HepG2 (cell line): ENCODE measurements at regions of chr10 and their contacts with region 1.

Region 1: DNA sequence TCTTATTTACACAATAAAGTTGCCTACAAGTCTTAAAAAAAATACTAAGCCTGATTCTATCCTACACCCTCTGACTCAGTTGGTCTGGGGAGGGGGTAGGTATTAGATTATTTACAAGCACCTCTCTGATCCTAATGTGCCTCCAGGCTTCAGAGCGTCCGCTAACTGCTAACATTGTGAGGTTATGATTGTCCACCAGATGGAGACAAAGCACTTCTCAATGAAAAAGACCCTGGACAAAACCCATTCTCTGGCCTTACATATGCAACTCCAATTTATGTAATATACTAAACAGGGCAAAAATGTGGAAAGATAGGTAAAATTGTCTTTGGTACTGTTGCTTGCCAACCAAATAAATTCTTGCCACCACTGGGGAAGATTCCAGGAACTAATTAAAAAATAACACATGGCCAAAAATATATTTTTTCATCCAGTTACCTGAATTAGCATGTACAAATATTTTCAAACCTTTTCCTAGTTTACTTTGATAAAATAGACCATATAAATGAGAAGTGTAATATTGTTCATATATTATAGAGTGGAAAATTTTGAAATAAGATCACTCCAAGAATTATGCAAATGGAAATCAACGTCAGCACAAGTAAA is 92.4 kb downstream of the KIF20B start:
- DNase-seq: peak; percentile 73
- ATAC-seq: peak; percentile 93
- H3K4me3 ChIP-seq: no peak overlapping the region
- H3K27ac ChIP-seq: no peak overlapping the region
- H3K4me1 ChIP-seq: peaks cover 29% of the 10 kb centered on the region
- H3K27me3 ChIP-seq: no peaks in the 10 kb centered on the region
- CTCF ChIP-seq: peak; percentile 83
- EP300 ChIP-seq: no peak
- POLR2A ChIP-seq: no peak
- RAD21 ChIP-seq: peak; percentile 88

Region 2: DNA sequence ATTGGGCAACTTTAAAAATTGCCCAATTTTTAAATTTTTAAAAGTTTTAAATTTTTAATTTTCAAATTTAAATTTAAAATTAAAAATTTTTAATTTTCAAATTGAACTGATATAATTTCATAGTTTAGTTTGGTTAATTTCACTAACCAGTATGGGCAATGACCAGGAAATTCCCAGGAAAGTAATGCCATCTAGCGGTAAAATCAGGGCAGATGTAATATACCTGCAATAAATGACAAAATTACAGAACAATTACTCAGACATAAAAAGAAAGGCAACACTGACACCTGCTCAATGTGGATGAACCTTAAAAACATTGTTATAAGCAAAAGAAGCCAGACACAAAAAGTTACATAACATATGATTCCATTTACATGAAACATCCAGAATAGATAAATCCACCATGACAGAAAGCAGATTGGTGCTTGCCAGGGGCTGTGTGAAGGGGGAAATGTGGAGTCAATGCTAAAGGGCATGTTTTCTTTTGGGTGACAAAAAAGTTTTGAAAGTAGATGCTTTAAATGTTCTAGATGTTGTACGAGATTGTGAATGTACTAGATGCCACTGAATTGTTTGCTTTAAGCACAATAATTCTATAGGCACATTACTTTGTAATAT is 229.8 kb before region 1 on chr10:
- CTCF ChIA-PET with region 1: no interaction called
- POLR2A ChIA-PET with region 1: no interaction called
- in situ Hi-C with region 1: no loop called
- intact Hi-C with region 1: no loop called
- DNase-seq: peak; percentile 32
- ATAC-seq: peak; percentile 64
- H3K4me3 ChIP-seq: no peak overlapping the region
- H3K27ac ChIP-seq: no peak overlapping the region
- H3K4me1 ChIP-seq: peaks cover 18% of the 10 kb centered on the region
- H3K27me3 ChIP-seq: no peaks in the 10 kb centered on the region; a peak in 1 of 5 replicates
- CTCF ChIP-seq: peak; percentile 67
- EP300 ChIP-seq: no peak
- POLR2A ChIP-seq: no peak
- RAD21 ChIP-seq: peak; percentile 61

Region 3: GRCh38 chr10:89853781-89854191 is 60.0 kb after region 1 on chr10:
- CTCF ChIA-PET with region 1: no interaction called
- POLR2A ChIA-PET with region 1: no interaction called
- in situ Hi-C with region 1: no loop called
- intact Hi-C with region 1: loop called (anchors 2 kb)
- DNase-seq: peak; percentile 5
- ATAC-seq: peak; percentile 96
- H3K4me3 ChIP-seq: no peak overlapping the region; a peak in 1 of 6 replicates
- H3K27ac ChIP-seq: no peak overlapping the region
- H3K4me1 ChIP-seq: peaks cover 7% of the 10 kb centered on the region; the same call in 1 of the 2 replicates
- H3K27me3 ChIP-seq: no peaks in the 10 kb centered on the region
- CTCF ChIP-seq: peak; percentile 60
- EP300 ChIP-seq: no peak
- POLR2A ChIP-seq: no peak
- RAD21 ChIP-seq: no peak

Region 4: GRCh38 chr10:90148116-90148855 is 354.5 kb after region 1 on chr10:
- CTCF ChIA-PET with region 1: no interaction called
- POLR2A ChIA-PET with region 1: no interaction called
- in situ Hi-C with region 1: loop called (anchors 10 kb)
- intact Hi-C with region 1: no loop called
- DNase-seq: peak; percentile 3
- ATAC-seq: peak; percentile 22; the same call in 1 of the 3 replicates
- H3K4me3 ChIP-seq: no peak overlapping the region
- H3K27ac ChIP-seq: no peak overlapping the region
- H3K4me1 ChIP-seq: no peaks in the 10 kb centered on the region
- H3K27me3 ChIP-seq: no peaks in the 10 kb centered on the region
- CTCF ChIP-seq: peak; percentile 34
- EP300 ChIP-seq: no peak
- POLR2A ChIP-seq: no peak
- RAD21 ChIP-seq: no peak

Region 5: DNA sequence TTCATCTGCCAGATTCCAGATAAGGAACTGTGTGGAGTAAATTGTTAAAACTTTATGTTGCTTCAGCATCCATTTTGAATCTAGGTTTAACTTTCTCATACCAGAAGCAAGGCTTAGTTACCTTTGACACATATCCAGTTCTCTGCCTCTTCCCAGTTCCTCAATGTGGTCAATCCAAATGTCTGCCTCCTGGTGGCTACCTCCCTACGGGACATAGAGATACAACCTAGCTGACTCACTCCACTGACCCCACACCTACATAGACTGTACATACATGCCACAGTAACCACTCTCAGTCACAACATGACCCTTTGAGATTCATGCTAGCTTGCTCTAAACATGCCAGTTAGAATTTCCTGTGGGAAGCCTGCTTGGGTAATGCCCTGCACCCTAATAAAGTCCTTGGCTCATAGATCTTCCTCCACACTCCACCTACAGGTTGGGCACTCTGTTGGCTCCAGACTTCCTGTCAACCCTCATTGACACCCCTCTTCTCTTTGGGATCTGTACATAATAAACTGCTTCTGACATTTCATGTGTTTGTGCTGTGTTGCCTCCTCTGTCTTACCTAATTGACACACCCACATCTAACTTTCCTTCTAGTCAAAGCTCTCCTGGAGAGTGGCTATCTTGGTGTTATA is 786.0 kb after region 1 on chr10:
- CTCF ChIA-PET with region 1: no interaction called
- POLR2A ChIA-PET with region 1: no interaction called
- in situ Hi-C with region 1: no loop called
- intact Hi-C with region 1: loop called (anchors 1 kb)
- DNase-seq: peak; percentile 21
- ATAC-seq: peak; percentile 91
- H3K4me3 ChIP-seq: no peak overlapping the region
- H3K27ac ChIP-seq: no peak overlapping the region
- H3K4me1 ChIP-seq: no peaks in the 10 kb centered on the region
- H3K27me3 ChIP-seq: no peaks in the 10 kb centered on the region
- CTCF ChIP-seq: peak; percentile 21; the same call in 1 of the 2 replicates
- EP300 ChIP-seq: no peak
- POLR2A ChIP-seq: no peak
- RAD21 ChIP-seq: no peak

Region 6: DNA sequence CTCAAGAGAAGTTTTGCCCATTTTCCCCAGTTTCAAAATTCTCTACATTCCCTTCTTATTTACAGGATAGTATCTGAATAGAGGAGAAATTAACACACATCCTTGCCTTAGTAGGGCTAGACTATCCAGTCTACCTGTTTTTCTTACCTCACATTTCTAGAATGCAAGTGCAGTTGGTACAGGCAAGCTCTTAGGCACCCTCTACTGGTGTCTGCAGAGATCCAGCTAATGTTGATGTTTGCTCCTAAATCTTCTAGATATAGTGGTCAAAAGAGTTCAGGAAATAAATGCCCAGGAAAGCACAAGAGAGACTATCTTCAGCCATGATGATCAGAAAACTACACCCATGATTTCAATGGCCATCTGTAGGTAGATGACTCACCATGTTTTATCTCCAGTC is 858.8 kb after region 1 on chr10:
- CTCF ChIA-PET with region 1: interaction called, 3 read pairs
- POLR2A ChIA-PET with region 1: no interaction called
- in situ Hi-C with region 1: no loop called
- intact Hi-C with region 1: loop called (anchors 1 kb)
- DNase-seq: no peak
- ATAC-seq: peak; percentile 52; the same call in 2 of the 3 replicates
- H3K4me3 ChIP-seq: no peak overlapping the region
- H3K27ac ChIP-seq: no peak overlapping the region
- H3K4me1 ChIP-seq: no peaks in the 10 kb centered on the region
- H3K27me3 ChIP-seq: no peaks in the 10 kb centered on the region
- CTCF ChIP-seq: peak; percentile 18; the same call in 1 of the 2 replicates
- EP300 ChIP-seq: no peak
- POLR2A ChIP-seq: no peak
- RAD21 ChIP-seq: no peak

Region 7: GRCh38 chr10:90862908-90863514 is 1069.3 kb after region 1 on chr10:
- CTCF ChIA-PET with region 1: interaction called, 5 read pairs
- POLR2A ChIA-PET with region 1: no interaction called
- in situ Hi-C with region 1: loop called (anchors 10 kb)
- intact Hi-C with region 1: loop called (anchors 1 kb)
- DNase-seq: peak; percentile 16
- ATAC-seq: no peak
- H3K4me3 ChIP-seq: no peak overlapping the region
- H3K27ac ChIP-seq: no peak overlapping the region
- H3K4me1 ChIP-seq: peaks cover 6% of the 10 kb centered on the region; the same call in 1 of the 2 replicates
- H3K27me3 ChIP-seq: peaks cover 2 to 29% of the 10 kb centered on the region in 2 experiments; a peak in 3 of 5 replicates
- CTCF ChIP-seq: peak; percentile 48
- EP300 ChIP-seq: no peak
- POLR2A ChIP-seq: no peak
- RAD21 ChIP-seq: no peak; the same call in 1 of the 2 replicates